Naive thymus-derived CD4-positive, alpha-beta T cell (primary cell): ENCODE measurements at regions of chr9 and their contacts with region 1.

Region 1: GRCh38 chr9:20356403-20357035 is 265.8 kb downstream of the MLLT3 start:
- DNase-seq: peak; percentile 8 to 78 (median 66)
- ATAC-seq: peak; percentile 82
- H3K4me3 ChIP-seq: no peak overlapping the region
- H3K4me3 Mint-ChIP-seq: peak overlapping the region in 7 of 10 donors; percentile 12 to 76 (median 55)
- H3K27ac ChIP-seq: no peak overlapping the region
- H3K27ac Mint-ChIP-seq: peak overlapping the region; percentile 5 to 94 (median 79)
- H3K4me1 ChIP-seq: peaks cover 0 to 29% of the 10 kb centered on the region in 2 donors
- H3K4me1 Mint-ChIP-seq: peaks cover 24 to 83% (median 55%) of the 10 kb centered on the region in 7 donors
- H3K27me3 ChIP-seq: no peaks in the 10 kb centered on the region
- H3K27me3 Mint-ChIP-seq: no peaks in the 10 kb centered on the region

Region 2: GRCh38 chr9:19174127-19174912 is 1182.2 kb before region 1 on chr9:
- CTCF ChIA-PET with region 1: no interaction called
- POLR2A ChIA-PET with region 1: no interaction called
- intact Hi-C with region 1: no loop called
- DNase-seq: peak; percentile 11 to 51 (median 37)
- ATAC-seq: peak; percentile 91
- H3K4me3 ChIP-seq: no peak overlapping the region
- H3K4me3 Mint-ChIP-seq: peak overlapping the region in 3 of 10 donors; percentile 14 to 70 (median 63)
- H3K27ac ChIP-seq: no peak overlapping the region
- H3K27ac Mint-ChIP-seq: peak overlapping the region in 5 of 9 donors; percentile 52 to 84 (median 62)
- H3K4me1 ChIP-seq: peaks cover 5 to 16% of the 10 kb centered on the region in 2 donors
- H3K4me1 Mint-ChIP-seq: peaks cover 25 to 39% (median 31%) of the 10 kb centered on the region in 7 donors
- H3K27me3 ChIP-seq: no peaks in the 10 kb centered on the region
- H3K27me3 Mint-ChIP-seq: no peaks in the 10 kb centered on the region

Region 3: DNA sequence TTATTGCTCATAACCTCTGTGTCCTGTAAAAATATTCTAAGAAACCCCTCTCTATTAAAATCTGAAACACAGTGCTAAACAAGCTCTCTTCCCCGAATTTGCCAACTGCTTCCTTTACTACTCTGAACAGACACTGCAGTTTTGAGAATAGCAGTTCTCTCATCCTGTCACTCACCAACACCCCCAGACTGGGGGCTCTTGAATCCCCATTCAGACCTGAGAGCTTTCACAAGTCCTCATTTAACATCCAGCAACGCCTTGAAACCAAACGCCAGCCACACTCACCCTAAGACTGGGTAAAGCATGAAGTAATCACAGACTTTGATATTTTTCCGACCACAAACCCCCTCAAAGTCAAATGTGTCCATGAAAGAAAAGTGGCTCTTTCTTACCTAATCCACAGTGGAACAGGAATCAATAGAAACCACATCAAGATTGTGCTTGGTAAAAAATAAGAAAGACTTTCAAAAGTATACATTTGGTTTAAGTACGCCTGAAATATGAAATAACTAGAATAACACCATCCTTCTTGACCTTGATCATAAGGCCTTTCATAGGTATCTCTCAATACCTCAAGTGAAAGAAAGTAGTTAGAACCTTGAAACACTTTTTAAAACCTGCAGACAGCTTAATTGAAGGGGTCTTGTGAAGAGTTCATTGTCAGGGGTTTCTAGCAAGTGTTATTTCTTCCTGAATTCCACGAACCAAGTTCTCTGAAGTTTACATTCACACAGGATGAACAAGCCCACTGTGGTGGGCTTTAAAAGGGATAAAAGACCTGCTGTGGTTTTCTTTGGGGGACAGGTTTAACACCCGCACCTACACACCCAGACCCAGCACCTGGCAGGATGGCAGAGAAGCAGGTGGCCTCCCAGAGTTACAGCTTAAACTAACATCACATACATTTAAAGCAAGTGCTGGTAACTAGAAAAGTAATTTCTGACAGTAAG is 146.9 kb before region 1 on chr9:
- CTCF ChIA-PET with region 1: no interaction called
- POLR2A ChIA-PET with region 1: no interaction called
- intact Hi-C with region 1: loop called in 1 of 2 experiments (anchors 5 kb)
- DNase-seq: peak in 8 of 9 donors; percentile 49 to 78 (median 71)
- ATAC-seq: peak; percentile 86
- H3K4me3 ChIP-seq: no peak overlapping the region
- H3K4me3 Mint-ChIP-seq: peak overlapping the region; percentile 58 to 92 (median 70)
- H3K27ac ChIP-seq: no peak overlapping the region
- H3K27ac Mint-ChIP-seq: peak overlapping the region; percentile 65 to 94 (median 85)
- H3K4me1 ChIP-seq: peaks cover 17 to 30% of the 10 kb centered on the region in 2 donors
- H3K4me1 Mint-ChIP-seq: peaks cover 31 to 46% (median 41%) of the 10 kb centered on the region in 7 donors
- H3K27me3 ChIP-seq: no peaks in the 10 kb centered on the region
- H3K27me3 Mint-ChIP-seq: no peaks in the 10 kb centered on the region

Region 4: GRCh38 chr9:20407012-20407411 is 50.5 kb after region 1 on chr9:
- CTCF ChIA-PET with region 1: interaction called, 4 read pairs
- POLR2A ChIA-PET with region 1: interaction called, 5 read pairs
- intact Hi-C with region 1: loop called in 1 of 2 experiments (anchors 1 kb)
- DNase-seq: no peak
- ATAC-seq: no peak
- H3K4me3 ChIP-seq: no peak overlapping the region
- H3K4me3 Mint-ChIP-seq: peak overlapping the region in 1 of 10 donors; percentile 34
- H3K27ac ChIP-seq: no peak overlapping the region
- H3K27ac Mint-ChIP-seq: peak overlapping the region in 3 of 9 donors; percentile 28 to 48 (median 38)
- H3K4me1 ChIP-seq: peaks cover 0 to 30% of the 10 kb centered on the region in 2 donors
- H3K4me1 Mint-ChIP-seq: peaks cover 21 to 95% (median 88%) of the 10 kb centered on the region in 7 donors
- H3K27me3 ChIP-seq: no peaks in the 10 kb centered on the region
- H3K27me3 Mint-ChIP-seq: no peaks in the 10 kb centered on the region

Region 5: GRCh38 chr9:20684035-20684872 is 327.7 kb after region 1 on chr9 and contains the start of gene FOCAD:
- CTCF ChIA-PET with region 1: interaction called, 4 read pairs
- POLR2A ChIA-PET with region 1: no interaction called
- intact Hi-C with region 1: loop called (anchors 1 to 2 kb)
- DNase-seq: peak; percentile 94 to 99 (median 96)
- ATAC-seq: peak; percentile 99
- H3K4me3 ChIP-seq: peak within 1 kb of the TSS; percentile 95
- H3K4me3 Mint-ChIP-seq: peak within 1 kb of the TSS; percentile 89 to 98 (median 96)
- H3K27ac ChIP-seq: peak within 1 kb of the TSS; percentile 81
- H3K27ac Mint-ChIP-seq: peak within 1 kb of the TSS; percentile 78 to 96 (median 92)
- H3K4me1 ChIP-seq: peaks cover 0 to 6% of the 10 kb centered on the region in 2 donors
- H3K4me1 Mint-ChIP-seq: peaks cover 11 to 29% (median 24%) of the 10 kb centered on the region in 7 donors
- H3K27me3 ChIP-seq: no peaks in the 10 kb centered on the region
- H3K27me3 Mint-ChIP-seq: no peaks in the 10 kb centered on the region
- total RNA-seq, gene FOCAD: 12.8 to 33.7 (median 22.3) TPM

Region 6: DNA sequence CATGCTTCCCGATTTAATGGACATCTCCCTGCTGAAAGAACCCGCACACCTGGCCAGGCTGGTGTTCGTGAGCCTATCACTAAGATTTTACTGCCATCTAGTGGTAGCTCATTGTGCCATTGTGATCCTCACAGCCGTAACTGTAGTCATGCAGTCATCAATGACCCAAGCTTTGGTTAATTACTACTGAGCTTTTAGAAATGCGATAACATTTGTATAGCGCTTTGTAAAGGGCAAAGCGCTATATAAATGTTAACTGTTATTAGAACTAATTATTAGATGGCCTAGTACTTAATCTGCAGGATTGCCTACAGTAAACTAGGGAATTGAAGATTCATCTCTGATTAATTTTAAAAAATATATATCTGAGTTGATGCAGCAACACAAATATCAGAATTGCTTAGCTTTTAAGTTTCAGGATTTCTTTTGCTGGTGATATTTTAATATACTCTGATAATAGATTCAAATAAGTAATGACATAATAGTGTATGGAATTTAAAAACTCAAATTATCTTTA is 584.7 kb after region 1 on chr9:
- CTCF ChIA-PET with region 1: interaction called, 27 read pairs
- POLR2A ChIA-PET with region 1: no interaction called
- intact Hi-C with region 1: loop called (anchors 1 kb)
- DNase-seq: peak; percentile 13 to 73 (median 62)
- ATAC-seq: peak; percentile 95
- H3K4me3 ChIP-seq: no peak overlapping the region
- H3K4me3 Mint-ChIP-seq: peak overlapping the region in 1 of 10 donors; percentile 20
- H3K27ac ChIP-seq: no peak overlapping the region
- H3K27ac Mint-ChIP-seq: peak overlapping the region in 3 of 9 donors; percentile 13 to 29 (median 29)
- H3K4me1 ChIP-seq: no peaks in the 10 kb centered on the region
- H3K4me1 Mint-ChIP-seq: peaks cover 0 to 8% (median 5%) of the 10 kb centered on the region in 7 donors
- H3K27me3 ChIP-seq: no peaks in the 10 kb centered on the region
- H3K27me3 Mint-ChIP-seq: no peaks in the 10 kb centered on the region